Endothelial cell of umbilical vein (primary cell): ENCODE measurements at regions of chr1 and their contacts with region 1.

Region 1: DNA sequence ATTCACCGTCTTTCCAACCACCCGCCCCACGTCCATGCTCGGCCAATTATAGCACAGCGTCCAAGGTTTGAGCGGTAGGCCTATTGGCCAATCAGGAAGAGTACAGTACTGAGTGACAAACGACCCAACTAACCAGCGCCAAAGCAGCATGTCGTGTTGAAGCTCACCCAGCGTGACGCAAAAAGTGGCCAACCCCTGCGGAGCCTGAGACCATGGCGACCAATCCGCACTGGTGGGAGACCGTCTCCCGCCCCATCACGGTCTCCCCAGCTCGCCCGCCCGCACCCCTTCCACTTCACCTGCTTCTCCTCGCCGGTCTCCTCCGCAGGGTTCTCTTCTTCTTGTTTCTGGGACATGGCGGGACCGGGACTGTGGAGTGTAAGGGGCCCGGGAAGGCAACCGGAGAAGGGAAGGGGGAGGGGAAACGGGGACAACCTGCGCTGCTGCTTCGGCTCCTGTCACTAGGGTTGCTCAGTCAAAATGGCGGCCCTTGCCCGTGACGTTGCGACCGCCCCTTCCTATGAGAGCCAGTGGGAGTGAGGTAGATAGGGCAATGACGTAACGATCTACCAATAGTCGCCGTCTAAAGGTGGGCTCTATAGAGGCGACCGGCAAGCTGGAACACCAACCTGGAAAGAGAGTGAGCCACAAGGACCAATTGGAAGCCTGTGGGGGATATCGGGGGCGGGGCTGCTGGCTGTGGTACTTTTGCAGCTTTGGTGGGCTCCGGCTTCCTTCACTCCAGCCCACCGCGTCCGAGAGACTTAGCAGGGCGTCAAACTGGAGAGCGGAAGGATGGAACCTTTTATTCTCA is at the start of gene ENSA:
- DNase-seq: peak; percentile 99
- H3K4me3 ChIP-seq: peak within 1 kb of the TSS; percentile 55 to 89 (median 67)
- H3K27ac ChIP-seq: peak within 1 kb of the TSS; percentile 71
- H3K4me1 ChIP-seq: peaks cover 11% of the 10 kb centered on the region
- H3K27me3 ChIP-seq: no peaks in the 10 kb centered on the region
- CTCF ChIP-seq: no peak
- POLR2A ChIP-seq: peak; percentile 38
- total RNA-seq, gene ENSA: 155 and 162 TPM in 2 replicates

Region 2: DNA sequence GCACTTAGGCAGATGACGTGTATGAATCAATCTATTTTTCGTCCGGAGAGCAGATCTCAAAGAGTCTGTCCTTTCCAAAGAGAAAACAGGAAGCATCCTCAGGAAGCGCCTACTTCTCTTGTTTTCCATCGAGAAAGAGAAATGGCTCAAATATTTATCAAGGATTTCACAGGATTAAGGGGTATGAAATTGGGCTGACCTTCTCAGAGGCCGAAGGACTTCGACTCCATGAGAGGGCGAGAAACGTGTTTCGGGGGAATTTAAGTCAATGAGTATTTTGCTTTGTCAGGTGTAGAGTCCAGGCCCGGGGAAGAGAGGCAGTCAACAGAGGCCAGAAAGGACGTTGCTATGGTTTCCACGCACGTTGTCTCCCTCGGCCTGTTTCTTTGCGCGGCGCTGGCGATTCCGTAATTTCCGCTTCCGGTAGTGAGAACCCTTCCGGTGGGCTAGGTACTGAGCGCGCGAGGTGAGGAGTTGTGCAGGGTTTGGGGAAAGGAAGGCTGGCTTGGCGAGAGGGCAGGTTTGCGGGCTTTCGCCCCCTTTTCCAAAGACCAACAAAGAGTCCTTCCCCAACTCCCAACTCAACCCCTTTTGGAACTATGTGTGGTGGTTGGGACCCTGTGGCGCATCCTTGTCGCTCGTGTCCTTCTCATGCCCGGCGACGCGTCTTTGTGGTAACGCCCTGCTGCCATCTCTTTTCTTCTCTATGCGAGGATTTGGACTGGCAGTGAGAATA is 335.7 kb before region 1 on chr1 and contains the start of gene MRPS21:
- CTCF ChIA-PET with region 1: no interaction called
- POLR2A ChIA-PET with region 1: no interaction called
- dilution Hi-C with region 1: no loop called
- intact Hi-C with region 1: no loop called
- DNase-seq: peak; percentile 94
- H3K4me3 ChIP-seq: peak within 1 kb of the TSS; percentile 25 to 90 (median 54)
- H3K27ac ChIP-seq: peak within 1 kb of the TSS; percentile 81
- H3K4me1 ChIP-seq: peaks cover 13% of the 10 kb centered on the region
- H3K27me3 ChIP-seq: no peaks in the 10 kb centered on the region
- CTCF ChIP-seq: no peak
- POLR2A ChIP-seq: peak; percentile 94
- total RNA-seq, gene MRPS21: 73.0 and 76.7 TPM in 2 replicates

Region 3: GRCh38 chr1:150363426-150364230 is 265.7 kb before region 1 on chr1 and contains the start of gene RPRD2:
- CTCF ChIA-PET with region 1: no interaction called
- POLR2A ChIA-PET with region 1: no interaction called
- dilution Hi-C with region 1: no loop called
- intact Hi-C with region 1: loop called (anchors 10 kb)
- DNase-seq: peak; percentile 99
- H3K4me3 ChIP-seq: peak within 1 kb of the TSS; percentile 58 to 95 (median 84)
- H3K27ac ChIP-seq: peak within 1 kb of the TSS; percentile 75
- H3K4me1 ChIP-seq: peaks cover 18% of the 10 kb centered on the region
- H3K27me3 ChIP-seq: no peaks in the 10 kb centered on the region
- CTCF ChIP-seq: no peak
- POLR2A ChIP-seq: peak; percentile 97
- total RNA-seq, gene RPRD2: 23.9 and 24.5 TPM in 2 replicates

Region 4: DNA sequence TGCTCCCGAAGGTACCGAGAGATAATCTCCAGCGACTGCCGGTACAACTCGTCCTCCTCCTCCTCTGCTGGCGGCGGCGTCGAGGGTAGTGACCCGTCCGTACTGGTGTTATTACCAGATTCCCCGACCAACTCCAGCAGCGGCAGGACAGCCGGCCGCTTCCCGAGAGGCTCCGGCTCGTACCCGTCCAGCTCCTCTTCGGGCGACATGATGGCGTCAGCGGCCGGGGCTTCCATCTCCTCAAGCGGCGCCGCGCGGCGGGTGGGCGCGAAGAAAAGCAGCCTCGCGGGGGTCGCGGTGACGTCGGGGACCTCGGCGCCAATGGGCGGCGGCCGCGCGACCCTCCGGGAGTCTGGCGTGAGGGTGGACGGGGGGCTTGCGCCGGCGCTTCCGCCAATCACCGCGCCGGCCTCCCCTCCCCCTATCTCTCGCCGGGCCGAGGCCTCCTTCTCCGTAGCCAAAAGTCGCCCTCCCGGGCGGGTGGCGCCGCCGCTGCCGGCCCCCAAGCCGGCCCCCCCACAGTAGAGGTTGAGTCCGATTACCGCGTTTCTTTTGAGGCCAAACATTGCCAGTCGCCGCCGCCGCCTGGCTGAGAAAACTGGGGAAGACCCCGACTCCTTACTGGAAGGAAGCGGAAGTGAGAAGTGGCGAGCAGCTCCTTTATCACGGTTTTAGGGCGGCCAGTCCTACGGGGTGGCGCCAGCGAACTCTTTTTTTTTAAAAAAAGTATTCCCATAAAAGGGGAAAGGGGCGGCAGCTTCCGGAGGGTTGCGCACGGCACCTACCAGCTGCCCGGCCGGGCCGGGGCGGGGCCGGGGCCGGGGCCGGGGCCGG is 50.1 kb before region 1 on chr1 and contains the start of gene MCL1:
- CTCF ChIA-PET with region 1: interaction called, 147 read pairs
- POLR2A ChIA-PET with region 1: interaction called, 43 read pairs
- dilution Hi-C with region 1: no loop called
- intact Hi-C with region 1: loop called (anchors 2 kb)
- DNase-seq: peak; percentile 96
- H3K4me3 ChIP-seq: peak within 1 kb of the TSS; percentile 91 to 99 (median 92)
- H3K27ac ChIP-seq: peak within 1 kb of the TSS; percentile 98
- H3K4me1 ChIP-seq: peaks cover 28% of the 10 kb centered on the region
- H3K27me3 ChIP-seq: no peaks in the 10 kb centered on the region
- CTCF ChIP-seq: no peak
- POLR2A ChIP-seq: peak; percentile 99
- total RNA-seq, gene MCL1: 186 and 212 TPM in 2 replicates

Region 5: GRCh38 chr1:150696590-150697524 is 67.5 kb after region 1 on chr1 and contains the start of gene GOLPH3L:
- CTCF ChIA-PET with region 1: no interaction called
- POLR2A ChIA-PET with region 1: interaction called, 3 read pairs
- dilution Hi-C with region 1: no loop called
- intact Hi-C with region 1: loop called (anchors 1 kb)
- DNase-seq: peak; percentile 100
- H3K4me3 ChIP-seq: peak within 1 kb of the TSS; percentile 72 to 96 (median 87)
- H3K27ac ChIP-seq: peak within 1 kb of the TSS; percentile 57
- H3K4me1 ChIP-seq: peaks cover 32% of the 10 kb centered on the region
- H3K27me3 ChIP-seq: no peaks in the 10 kb centered on the region
- CTCF ChIP-seq: peak in 1 of 2 donors; percentile 15
- POLR2A ChIP-seq: peak; percentile 73
- total RNA-seq, gene GOLPH3L: 33.2 and 34.9 TPM in 2 replicates

Region 6: DNA sequence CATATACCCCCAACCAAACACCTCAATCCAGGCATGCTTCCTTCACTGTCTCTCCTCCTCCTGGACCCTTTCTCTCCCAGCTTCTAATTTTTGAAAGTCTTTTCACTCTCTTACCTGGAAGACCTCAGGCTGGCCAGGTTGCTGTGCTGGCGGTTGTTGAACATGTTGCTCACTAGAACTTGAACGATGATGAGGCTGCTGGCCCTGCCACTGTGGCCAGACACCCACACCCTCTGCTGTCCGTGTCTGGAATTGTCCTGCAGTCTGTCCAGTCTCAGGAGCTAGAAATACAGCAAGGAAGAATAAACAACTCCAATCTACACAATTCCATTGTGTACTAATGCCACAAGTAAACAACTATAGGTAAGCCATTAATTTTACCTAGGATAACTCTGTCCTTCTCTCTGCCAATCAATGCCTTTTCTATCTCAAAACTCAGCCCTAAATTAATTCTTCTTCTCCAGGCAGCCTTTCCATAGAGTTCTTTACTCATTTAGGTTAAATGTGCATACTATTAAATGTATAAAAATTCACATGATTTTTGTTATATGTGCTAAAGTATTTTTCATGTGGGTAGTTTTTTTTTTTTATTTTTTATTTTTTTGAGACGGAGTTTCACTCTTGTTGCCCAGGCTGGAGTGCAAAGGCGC is 183.9 kb after region 1 on chr1:
- CTCF ChIA-PET with region 1: interaction called, 37 read pairs
- POLR2A ChIA-PET with region 1: no interaction called
- dilution Hi-C with region 1: no loop called
- intact Hi-C with region 1: loop called (anchors 2 kb)
- DNase-seq: peak; percentile 83
- H3K4me3 ChIP-seq: no peak overlapping the region
- H3K27ac ChIP-seq: no peak overlapping the region
- H3K4me1 ChIP-seq: peaks cover 2% of the 10 kb centered on the region
- H3K27me3 ChIP-seq: no peaks in the 10 kb centered on the region
- CTCF ChIP-seq: peak; percentile 76 to 81
- POLR2A ChIP-seq: no peak

Region 7: DNA sequence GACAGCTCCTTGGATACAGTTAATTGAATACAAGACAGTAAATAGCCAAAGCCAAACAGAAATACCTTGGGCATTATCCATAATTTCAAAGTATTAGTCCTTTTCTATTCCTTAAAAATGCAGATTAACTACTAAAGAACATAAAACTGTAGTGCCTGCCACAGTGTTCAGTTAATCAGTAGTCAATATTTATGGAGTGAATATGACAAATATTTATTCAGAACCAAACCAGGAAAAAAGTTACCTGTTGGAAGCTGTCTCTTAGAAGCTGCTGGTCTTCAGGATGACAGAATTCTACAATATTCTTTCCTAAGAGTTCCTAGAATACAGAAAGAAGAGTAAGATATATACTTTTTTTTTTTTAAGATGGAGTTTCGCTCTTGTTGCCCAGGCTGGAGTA is 197.0 kb after region 1 on chr1:
- CTCF ChIA-PET with region 1: no interaction called
- POLR2A ChIA-PET with region 1: no interaction called
- dilution Hi-C with region 1: no loop called
- intact Hi-C with region 1: no loop called
- DNase-seq: no peak
- H3K4me3 ChIP-seq: no peak overlapping the region
- H3K27ac ChIP-seq: no peak overlapping the region
- H3K4me1 ChIP-seq: no peaks in the 10 kb centered on the region
- H3K27me3 ChIP-seq: no peaks in the 10 kb centered on the region
- CTCF ChIP-seq: no peak
- POLR2A ChIP-seq: no peak

Region 8: DNA sequence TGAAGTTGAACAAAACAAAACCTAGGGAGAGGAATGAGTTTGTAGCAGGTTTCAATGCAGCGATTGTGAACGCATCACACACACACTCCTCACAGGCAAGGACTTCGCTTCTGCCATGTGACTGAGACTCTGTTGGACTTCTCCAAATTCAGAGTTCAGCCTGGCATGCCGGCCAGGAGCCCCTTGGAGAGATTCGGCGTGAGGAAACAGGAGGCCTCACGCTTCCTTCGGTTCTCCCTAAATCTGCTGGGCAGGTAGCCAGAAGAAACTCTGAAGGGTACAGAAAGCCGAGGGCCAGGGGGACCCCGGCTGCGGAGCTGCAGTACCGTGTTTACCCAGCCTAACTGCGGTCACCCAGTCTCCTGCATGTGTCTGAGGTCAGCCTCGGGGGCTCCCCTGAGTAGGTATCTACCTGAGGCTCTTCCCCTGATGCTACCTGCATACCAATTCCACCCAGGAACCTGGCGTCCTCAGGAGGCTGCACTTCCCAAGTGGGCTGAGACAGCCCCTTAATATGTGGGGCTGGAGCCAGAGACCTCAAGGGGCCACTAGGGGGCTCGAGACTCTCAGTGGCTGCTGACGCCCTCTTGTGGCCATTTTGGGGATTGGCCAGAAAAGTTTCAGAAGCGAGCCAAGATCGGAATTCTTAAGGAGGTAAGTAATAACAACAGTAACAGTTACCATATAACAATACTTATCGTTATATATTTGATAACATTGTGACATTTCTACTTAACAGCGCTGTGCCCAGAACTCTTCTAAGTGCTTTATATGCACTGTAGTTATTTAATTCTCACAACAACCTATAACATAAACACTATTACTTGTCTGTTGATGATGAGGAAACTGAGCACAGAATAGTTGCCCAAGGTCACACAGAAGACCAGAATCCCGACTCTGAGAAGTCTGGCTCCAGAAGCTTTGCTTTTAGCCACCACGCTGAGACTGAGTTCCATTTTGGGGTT is 350.1 kb after region 1 on chr1:
- CTCF ChIA-PET with region 1: no interaction called
- POLR2A ChIA-PET with region 1: no interaction called
- dilution Hi-C with region 1: no loop called
- intact Hi-C with region 1: loop called (anchors 5 kb)
- DNase-seq: peak; percentile 91
- H3K4me3 ChIP-seq: no peak overlapping the region
- H3K27ac ChIP-seq: no peak overlapping the region
- H3K4me1 ChIP-seq: peaks cover 22% of the 10 kb centered on the region
- H3K27me3 ChIP-seq: no peaks in the 10 kb centered on the region
- CTCF ChIP-seq: peak; percentile 100
- POLR2A ChIP-seq: no peak

Region 9: DNA sequence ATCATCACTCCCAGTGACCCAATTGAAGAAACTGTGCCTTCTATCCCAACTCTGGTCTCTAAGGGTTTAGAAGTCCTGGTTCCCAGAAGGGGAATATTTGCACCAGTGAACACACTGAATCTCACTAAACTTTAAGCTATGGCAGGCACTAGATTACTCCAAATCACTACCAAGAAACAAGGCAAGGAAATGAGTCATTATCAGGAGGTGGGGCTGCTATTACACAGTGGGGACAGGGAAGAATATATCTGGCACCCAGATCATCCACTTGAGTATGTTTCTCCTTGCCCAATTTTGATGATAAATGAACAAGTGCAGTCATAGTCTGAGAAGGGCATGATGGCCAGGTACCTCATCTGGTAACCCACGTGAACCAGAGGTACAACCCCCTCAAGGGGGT is 1127.0 kb after region 1 on chr1:
- CTCF ChIA-PET with region 1: no interaction called
- POLR2A ChIA-PET with region 1: no interaction called
- dilution Hi-C with region 1: no loop called
- intact Hi-C with region 1: no loop called
- DNase-seq: peak; percentile 42
- H3K4me3 ChIP-seq: no peak overlapping the region
- H3K27ac ChIP-seq: peak overlapping the region; percentile 19
- H3K4me1 ChIP-seq: peaks cover 10% of the 10 kb centered on the region
- H3K27me3 ChIP-seq: no peaks in the 10 kb centered on the region
- CTCF ChIP-seq: no peak
- POLR2A ChIP-seq: no peak